Astrocyte of the cerebellum (primary cell): ENCODE measurements at regions of chr22 and their contacts with region 1.

Region 1: GRCh38 chr22:46149512-46150033 is 753 bp upstream of the PPARA start:
- DNase-seq: no peak
- H3K4me3 ChIP-seq: peak overlapping the region; percentile 51
- CTCF ChIP-seq: no peak

Region 2: DNA sequence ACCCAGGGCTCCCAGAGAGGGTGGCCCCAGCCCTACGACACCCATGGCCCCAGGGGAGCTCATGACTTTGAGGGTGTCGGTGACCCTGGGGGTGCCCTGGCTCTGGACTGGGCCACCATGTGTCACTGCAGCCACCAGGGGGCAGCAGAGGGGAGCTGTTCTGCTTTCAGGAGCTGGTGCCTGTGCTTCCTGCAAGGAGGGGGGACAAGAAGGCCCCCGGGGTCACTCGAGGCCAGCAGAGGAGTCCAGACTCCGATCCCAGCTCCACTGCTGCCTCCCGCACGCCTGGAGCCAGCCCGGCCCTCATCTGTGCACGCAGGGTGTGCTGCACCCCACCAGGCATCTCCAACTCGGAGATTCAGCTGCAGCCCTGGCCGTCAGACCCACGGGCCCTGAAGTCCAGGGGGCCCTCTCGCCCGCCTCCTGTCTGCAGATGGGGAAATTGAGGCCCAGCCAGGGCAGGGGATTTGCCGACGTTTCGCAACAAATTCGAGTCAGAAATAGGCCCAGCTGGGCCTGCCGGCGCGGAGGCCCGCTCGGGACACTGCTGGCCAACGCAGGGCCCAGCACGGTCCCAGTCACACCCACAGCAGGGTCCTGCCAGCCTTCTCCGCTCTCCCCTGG is 143.1 kb before region 1 on chr22:
- in situ Hi-C with region 1: loop called (anchors 10 kb)
- DNase-seq: peak; percentile 74
- H3K4me3 ChIP-seq: peak overlapping the region; percentile 16
- CTCF ChIP-seq: peak; percentile 90

Region 3: DNA sequence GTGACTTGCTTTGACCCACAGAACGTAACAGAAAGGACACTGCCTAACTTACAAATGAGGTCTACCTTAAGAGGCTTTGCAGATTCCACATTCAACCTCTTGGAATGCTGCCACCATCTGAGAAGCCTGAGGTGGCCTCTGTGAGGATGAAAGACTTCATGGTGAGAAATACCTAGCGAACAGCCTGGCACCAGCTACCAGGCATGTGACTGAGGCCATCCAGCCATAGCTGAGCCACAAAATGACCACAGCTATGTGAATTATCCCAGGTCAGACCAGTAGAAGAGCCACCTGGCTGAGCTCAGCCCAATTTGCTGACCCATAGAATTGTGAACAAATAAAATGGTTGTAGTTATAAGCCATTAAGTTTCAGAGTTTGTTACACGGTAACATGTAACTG is 38.3 kb after region 1 on chr22:
- in situ Hi-C with region 1: no loop called
- DNase-seq: peak; percentile 18
- H3K4me3 ChIP-seq: no peak overlapping the region
- CTCF ChIP-seq: no peak

Region 4: DNA sequence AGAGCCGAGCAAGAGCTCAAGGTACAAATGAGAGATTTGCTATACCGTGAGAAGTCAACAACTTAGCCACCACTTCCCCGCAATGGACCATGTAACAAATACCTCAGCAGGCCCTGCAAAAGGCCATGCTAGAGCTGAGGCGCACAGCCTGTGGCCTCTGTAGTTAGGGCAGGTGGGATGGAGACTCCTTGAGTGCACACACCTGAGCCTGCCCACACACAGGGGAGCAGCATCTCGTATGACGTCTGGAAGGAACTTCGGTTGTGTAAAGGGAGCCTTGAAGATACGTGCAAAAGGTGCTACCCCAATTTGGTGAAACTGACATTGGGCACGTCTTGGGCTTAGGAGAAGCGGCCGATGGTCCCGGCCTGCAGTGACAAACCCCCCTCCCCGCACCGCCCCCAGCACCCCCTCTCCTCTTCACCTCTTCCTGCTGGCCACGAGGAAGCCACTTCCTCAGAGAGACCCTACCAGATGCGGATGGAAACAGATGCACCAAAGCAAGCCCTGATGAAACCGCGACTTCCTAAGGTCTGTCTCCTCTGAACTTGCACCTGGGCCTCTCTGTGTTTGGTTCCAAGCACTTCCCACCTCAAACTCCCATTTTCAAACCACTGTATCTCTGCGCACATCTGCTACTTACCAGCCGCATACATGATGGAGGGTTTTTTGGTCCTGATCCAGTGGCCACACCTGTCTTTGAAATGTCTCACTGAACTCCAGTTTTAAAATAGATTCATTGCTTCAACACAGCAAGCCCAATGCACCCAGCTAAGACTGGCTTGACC is 89.9 kb after region 1 on chr22:
- in situ Hi-C with region 1: loop called (anchors 5 kb)
- DNase-seq: no peak
- H3K4me3 ChIP-seq: no peak overlapping the region
- CTCF ChIP-seq: no peak

Region 5: GRCh38 chr22:46335201-46336118 is 185.9 kb after region 1 on chr22 and contains the start of gene TRMU:
- in situ Hi-C with region 1: loop called (anchors 5 kb)
- DNase-seq: peak; percentile 38
- H3K4me3 ChIP-seq: peak within 1 kb of the TSS; percentile 76
- CTCF ChIP-seq: no peak

Region 6: GRCh38 chr22:46377566-46378425 is 228.2 kb after region 1 on chr22:
- in situ Hi-C with region 1: no loop called
- DNase-seq: no peak
- H3K4me3 ChIP-seq: no peak overlapping the region
- CTCF ChIP-seq: no peak

Region 7: GRCh38 chr22:46408568-46409506 is 259.3 kb after region 1 on chr22:
- in situ Hi-C with region 1: no loop called
- DNase-seq: no peak
- H3K4me3 ChIP-seq: no peak overlapping the region
- CTCF ChIP-seq: no peak

Region 8: GRCh38 chr22:46432164-46433068 is 282.8 kb after region 1 on chr22:
- in situ Hi-C with region 1: loop called (anchors 10 kb)
- DNase-seq: no peak
- H3K4me3 ChIP-seq: no peak overlapping the region
- CTCF ChIP-seq: no peak